Vagina (tissue), 2 donors: ENCODE measurements at regions of chr15 and their contacts with region 1.

Region 1: DNA sequence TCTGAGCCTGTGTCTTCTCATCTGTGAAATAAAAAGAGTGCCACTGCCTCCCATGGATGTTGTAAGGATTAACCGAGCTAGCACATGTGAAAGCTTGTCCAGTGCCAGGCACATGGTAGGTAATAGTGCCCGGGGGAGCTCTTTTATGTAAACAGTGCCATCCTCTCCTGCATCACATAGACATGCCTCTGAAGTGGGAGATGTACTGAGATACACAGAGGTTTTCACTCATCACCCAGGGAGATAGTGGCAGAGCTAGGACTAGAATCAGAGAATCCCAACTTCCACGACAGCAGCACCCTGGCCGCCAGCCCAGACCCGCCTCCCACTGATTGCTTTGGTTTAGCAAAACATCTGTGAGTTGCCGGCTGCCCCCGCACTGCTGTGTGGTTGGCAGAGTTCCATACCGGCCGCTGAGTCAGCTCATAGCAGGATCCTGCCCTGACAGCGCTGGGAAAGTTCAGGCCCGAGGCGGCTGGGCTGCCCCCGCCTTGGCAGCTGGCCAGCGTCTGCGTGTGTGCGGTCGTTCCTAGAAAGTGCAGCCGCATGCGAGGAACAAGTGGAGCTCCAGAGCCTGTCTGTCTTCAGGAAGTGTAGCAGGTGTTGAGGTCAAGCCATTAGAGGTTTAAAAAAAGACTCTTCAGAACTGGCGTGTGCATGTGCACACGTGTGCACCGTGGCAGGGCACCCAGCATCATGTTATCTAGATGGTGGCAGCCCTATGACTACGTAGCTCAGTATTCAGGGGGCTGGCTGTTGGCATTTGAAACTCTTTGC is 5.0 kb downstream of the ARID3B start:
- DNase-seq: peak in 1 of 2 donors; percentile 95
- H3K4me3 ChIP-seq: peak overlapping the region; percentile 4
- H3K27ac ChIP-seq: no peak overlapping the region
- H3K4me1 ChIP-seq: peaks cover 37% of the 10 kb centered on the region
- H3K27me3 ChIP-seq: no peaks in the 10 kb centered on the region
- CTCF ChIP-seq: no peak
- POLR2A ChIP-seq: no peak

Region 2: GRCh38 chr15:74614744-74615507 is 68.9 kb after region 1 on chr15:
- intact Hi-C with region 1: loop called (anchors 5 kb)
- DNase-seq: no peak
- H3K4me3 ChIP-seq: peak overlapping the region; percentile 95 to 98
- H3K27ac ChIP-seq: peak overlapping the region; percentile 91
- H3K4me1 ChIP-seq: peaks cover 43% of the 10 kb centered on the region
- H3K27me3 ChIP-seq: no peaks in the 10 kb centered on the region
- CTCF ChIP-seq: no peak
- POLR2A ChIP-seq: peak in 1 of 2 donors; percentile 12